Activated T-helper 2 cell treated with anti-CD3 and anti-CD28 coated beads, Interferon-gamma antibody, Interleukin-2, Interleukin-4, amounts not matched to agents 10 μg/mL and 5 μg/mL and 100 μg/mL, durations not matched to agents 14 hours and 24 hours and 36 hours (primary cell): ENCODE measurements at regions of chr11 and their contacts with region 1.

Region 1: DNA sequence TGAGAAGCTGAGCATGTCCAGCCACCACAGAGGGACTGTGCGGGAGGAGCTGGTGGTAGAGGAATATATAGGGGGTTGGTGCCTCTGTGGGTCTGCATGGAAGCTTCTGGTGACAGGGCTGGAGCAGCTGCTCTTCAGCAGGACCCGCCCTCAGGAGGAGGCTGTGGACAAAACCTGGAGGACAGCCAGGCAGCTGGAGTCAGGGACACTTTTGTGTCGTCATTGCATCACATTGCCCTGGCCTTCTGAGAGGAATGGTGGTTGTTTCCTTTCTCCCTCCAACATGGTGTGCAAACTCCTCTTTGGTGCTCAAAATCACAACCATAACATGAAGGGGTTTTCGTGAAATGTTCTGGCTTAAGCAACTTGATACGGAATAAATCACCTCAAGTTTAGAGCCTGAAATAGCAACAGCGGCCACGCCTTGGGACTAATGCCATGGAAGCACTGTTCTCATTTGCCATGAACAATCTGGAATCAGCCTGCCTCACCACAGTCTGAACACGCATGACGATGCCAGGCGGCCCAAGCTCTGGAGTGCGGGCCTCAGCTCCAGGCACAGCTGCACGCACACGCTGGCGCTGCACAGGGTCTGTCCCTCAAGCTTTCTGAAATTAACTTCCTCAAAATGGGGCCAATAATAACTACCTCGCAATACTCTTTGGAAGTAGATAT is 17.1 kb upstream of the CSRP3 start:
- DNase-seq: no peak
- H3K4me3 Mint-ChIP-seq: no peak overlapping the region
- H3K27ac Mint-ChIP-seq: no peak overlapping the region
- H3K4me1 Mint-ChIP-seq: no peaks in the 10 kb centered on the region
- H3K27me3 Mint-ChIP-seq: peaks cover 17% of the 10 kb centered on the region

Region 2: DNA sequence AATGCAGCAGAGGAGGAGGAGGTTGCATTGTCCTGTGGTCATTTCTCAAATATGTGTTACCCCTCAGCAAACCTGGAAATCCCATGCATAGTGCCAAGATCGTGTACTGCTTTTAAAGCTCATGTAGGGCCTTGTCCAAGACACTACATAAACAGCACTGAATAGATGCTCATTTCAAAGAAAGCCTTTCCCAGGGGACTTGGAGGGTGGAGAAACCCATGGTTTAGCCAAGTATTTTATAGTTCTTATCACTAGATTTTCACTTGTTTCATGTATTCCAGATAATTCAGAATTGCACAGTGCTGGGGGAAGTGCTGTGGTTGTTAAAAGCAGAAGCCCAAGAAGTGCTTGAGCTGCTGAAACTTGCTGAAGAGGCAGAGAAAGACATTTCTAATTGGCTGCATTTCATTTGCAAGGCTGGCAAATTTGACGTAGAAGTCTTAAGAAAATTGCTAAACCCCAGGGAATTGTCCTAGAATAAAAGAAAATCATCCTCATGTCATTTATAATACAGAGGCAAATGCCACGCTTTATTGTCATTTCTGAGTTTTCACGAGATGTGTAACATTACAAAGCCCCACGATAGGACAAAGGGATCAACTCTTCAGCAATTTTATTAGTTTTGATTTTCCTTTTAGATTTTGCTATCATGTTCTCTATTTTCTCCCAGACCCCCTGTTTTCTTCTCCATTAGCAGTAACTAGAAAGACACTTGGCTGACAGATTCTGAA is 37.2 kb before region 1 on chr11:
- intact Hi-C with region 1: loop called (anchors 5 kb)
- DNase-seq: no peak
- H3K4me3 Mint-ChIP-seq: no peak overlapping the region
- H3K27ac Mint-ChIP-seq: no peak overlapping the region
- H3K4me1 Mint-ChIP-seq: no peaks in the 10 kb centered on the region
- H3K27me3 Mint-ChIP-seq: no peaks in the 10 kb centered on the region